A549 (cell line): ENCODE measurements at regions of chr20 and their contacts with region 1.

Region 1: GRCh38 chr20:22586645-22587310 is 2.4 kb upstream of the FOXA2 start:
- DNase-seq: peak; percentile 71 to 83
- ATAC-seq: peak; percentile 35 to 63
- H3K4me3 ChIP-seq: peak overlapping the region; percentile 54
- H3K27ac ChIP-seq: peak overlapping the region; percentile 94 to 96
- H3K4me1 ChIP-seq: peaks cover 24% of the 10 kb centered on the region
- CTCF ChIP-seq: peak; percentile 98
- EP300 ChIP-seq: no peak
- POLR2A ChIP-seq: no peak
- RAD21 ChIP-seq: peak; percentile 94 to 100

Region 2: DNA sequence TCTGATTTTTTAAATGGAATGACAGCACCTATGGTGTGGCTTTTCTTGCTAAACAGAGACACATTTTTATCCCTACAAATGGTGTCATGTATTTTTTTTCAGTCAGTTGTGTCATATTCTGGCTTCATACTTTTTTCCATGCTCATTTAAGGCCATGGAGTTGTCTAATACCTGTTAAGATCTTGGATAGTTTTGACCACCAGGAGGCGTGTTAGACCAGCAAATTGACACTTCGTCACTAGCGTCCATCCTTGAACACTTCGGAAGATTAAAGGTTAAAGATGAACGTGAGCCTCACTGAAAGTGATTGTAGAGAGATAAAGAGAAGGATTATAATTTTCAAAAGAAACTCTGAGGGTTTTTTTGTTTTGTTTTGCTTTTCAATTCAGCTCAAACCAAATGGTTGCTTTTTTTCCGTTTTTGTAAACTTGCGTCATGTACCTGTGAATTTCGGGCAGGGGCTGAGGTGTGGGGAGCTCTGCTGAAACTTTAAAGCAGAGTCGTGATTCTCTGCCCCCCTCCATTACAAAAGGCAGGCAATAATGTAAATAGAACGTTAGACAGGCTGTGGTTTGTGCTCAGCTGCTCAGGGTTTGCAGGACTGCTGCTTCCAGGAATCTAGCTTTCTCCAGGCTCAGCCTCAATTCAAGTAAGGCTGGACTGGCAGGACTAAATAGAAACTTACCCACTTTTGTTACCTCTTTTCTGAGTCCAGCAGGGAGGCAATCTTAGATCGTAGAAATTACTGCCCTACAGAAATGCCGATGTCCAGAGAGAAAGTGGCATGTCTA is 247.5 kb before region 1 on chr20:
- CTCF ChIA-PET with region 1: interaction called, 276 read pairs
- POLR2A ChIA-PET with region 1: interaction called, 3 read pairs
- DNase-seq: peak; percentile 60 to 91
- ATAC-seq: peak; percentile 71 to 86; a peak in 5 of 6 replicates
- H3K4me3 ChIP-seq: no peak overlapping the region
- H3K27ac ChIP-seq: peak overlapping the region; percentile 63 to 65; a peak in 4 of 6 replicates
- H3K4me1 ChIP-seq: peaks cover 25% of the 10 kb centered on the region
- CTCF ChIP-seq: peak; percentile 98
- EP300 ChIP-seq: no peak
- POLR2A ChIP-seq: no peak
- RAD21 ChIP-seq: peak; percentile 100

Region 3: GRCh38 chr20:22385602-22386305 is 201.0 kb before region 1 on chr20:
- CTCF ChIA-PET with region 1: interaction called, 134 read pairs
- POLR2A ChIA-PET with region 1: interaction called, 3 read pairs
- DNase-seq: peak; percentile 64 to 74
- ATAC-seq: peak; percentile 73 to 89; a peak in 5 of 6 replicates
- H3K4me3 ChIP-seq: no peak overlapping the region
- H3K27ac ChIP-seq: peak overlapping the region; percentile 57 to 67
- H3K4me1 ChIP-seq: peaks cover 54% of the 10 kb centered on the region
- CTCF ChIP-seq: peak; percentile 90
- EP300 ChIP-seq: no peak
- POLR2A ChIP-seq: no peak
- RAD21 ChIP-seq: peak; percentile 99 to 100

Region 4: DNA sequence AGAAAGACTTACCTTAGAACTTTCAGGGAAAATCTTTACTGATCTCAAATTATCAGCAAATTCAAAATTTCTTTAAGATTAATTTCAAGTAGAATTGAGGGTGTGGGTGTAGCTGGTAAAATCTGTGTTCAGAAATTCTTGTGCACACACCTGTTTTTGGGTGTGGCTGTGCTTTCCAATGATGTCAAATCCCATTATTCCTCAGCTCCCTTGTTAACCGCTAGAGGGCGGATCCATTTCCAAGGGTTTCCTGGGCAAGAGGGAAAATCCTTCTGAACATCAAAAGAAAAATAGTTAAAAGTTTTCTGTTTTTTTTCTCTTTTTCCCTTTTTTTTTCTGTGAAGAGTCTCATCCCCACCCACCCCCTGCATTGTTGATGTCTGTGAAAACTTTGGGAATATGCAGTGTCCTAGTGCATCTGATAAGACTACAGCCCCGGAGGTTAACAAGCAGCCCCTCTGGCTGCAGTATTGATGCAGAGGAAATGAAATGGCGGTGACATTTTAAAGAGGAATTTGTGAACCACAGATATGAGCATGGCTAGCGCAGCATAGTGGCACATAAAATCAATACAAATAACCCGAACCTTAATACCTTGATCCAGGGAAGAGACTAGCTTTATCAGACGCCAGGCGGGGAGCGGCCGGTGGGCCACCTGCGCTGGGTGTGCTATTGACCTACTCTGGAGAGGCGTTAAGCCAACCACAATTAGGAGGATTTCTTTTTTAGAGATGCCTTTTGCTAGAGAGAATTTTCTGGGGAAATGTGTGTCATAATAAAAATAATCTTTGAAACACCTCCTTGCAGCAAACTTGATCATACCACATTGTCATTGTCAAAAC is 133.3 kb before region 1 on chr20:
- CTCF ChIA-PET with region 1: interaction called, 52 read pairs
- POLR2A ChIA-PET with region 1: no interaction called
- DNase-seq: peak; percentile 70 to 77
- ATAC-seq: peak in 1 of 2 experiments; percentile 75; a peak in 3 of 6 replicates
- H3K4me3 ChIP-seq: no peak overlapping the region
- H3K27ac ChIP-seq: peak overlapping the region in 1 of 2 experiments; percentile 43; a peak in 3 of 6 replicates
- H3K4me1 ChIP-seq: peaks cover 8% of the 10 kb centered on the region; the same call in 2 of the 3 replicates
- CTCF ChIP-seq: peak; percentile 82
- EP300 ChIP-seq: no peak
- POLR2A ChIP-seq: no peak
- RAD21 ChIP-seq: peak; percentile 76 to 78

Region 5: GRCh38 chr20:22555791-22556564 is 30.8 kb before region 1 on chr20:
- CTCF ChIA-PET with region 1: interaction called, 15 read pairs
- POLR2A ChIA-PET with region 1: no interaction called
- DNase-seq: no peak
- ATAC-seq: no peak
- H3K4me3 ChIP-seq: no peak overlapping the region
- H3K27ac ChIP-seq: no peak overlapping the region
- H3K4me1 ChIP-seq: no peaks in the 10 kb centered on the region
- CTCF ChIP-seq: no peak
- EP300 ChIP-seq: no peak
- POLR2A ChIP-seq: no peak
- RAD21 ChIP-seq: no peak

Region 6: GRCh38 chr20:22623226-22623625 is 36.4 kb after region 1 on chr20:
- CTCF ChIA-PET with region 1: interaction called, 29 read pairs
- POLR2A ChIA-PET with region 1: no interaction called
- DNase-seq: peak in 1 of 2 experiments; percentile 52
- ATAC-seq: peak; percentile 69 to 83; a peak in 5 of 6 replicates
- H3K4me3 ChIP-seq: no peak overlapping the region
- H3K27ac ChIP-seq: no peak overlapping the region
- H3K4me1 ChIP-seq: peaks cover 12% of the 10 kb centered on the region
- CTCF ChIP-seq: no peak
- EP300 ChIP-seq: no peak
- POLR2A ChIP-seq: no peak
- RAD21 ChIP-seq: no peak

Region 7: GRCh38 chr20:22810626-22811569 is 224.1 kb after region 1 on chr20:
- CTCF ChIA-PET with region 1: no interaction called
- POLR2A ChIA-PET with region 1: no interaction called
- DNase-seq: no peak
- ATAC-seq: no peak
- H3K4me3 ChIP-seq: no peak overlapping the region
- H3K27ac ChIP-seq: peak overlapping the region; percentile 3 to 77; a peak in 4 of 6 replicates
- H3K4me1 ChIP-seq: peaks cover 29% of the 10 kb centered on the region
- CTCF ChIP-seq: no peak
- EP300 ChIP-seq: no peak
- POLR2A ChIP-seq: no peak
- RAD21 ChIP-seq: no peak